K562 (cell line): ENCODE measurements at regions of chr2 and their contacts with region 1.

Region 1: DNA sequence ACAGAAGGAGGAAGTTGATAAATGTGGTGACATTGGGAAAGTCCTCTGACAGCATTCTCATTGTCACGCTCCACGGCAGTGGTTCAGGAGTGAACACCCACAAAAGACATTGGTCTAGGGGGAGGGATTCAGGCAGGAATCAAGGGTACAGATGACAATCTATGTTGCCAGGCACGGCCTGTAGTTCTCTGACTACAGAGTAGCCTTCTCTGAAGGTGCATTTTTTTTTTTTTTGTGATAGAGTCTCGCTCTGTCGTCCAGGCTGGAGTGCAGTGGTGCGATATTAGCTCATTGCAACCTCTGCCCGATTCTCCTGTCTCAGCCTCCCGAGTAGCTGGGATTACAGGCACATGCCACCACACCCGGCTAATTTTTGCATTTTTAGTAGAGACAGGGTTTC is 7.4 kb upstream of the MOB1A start:
- DNase-seq: peak; percentile 41 to 89 (median 63)
- ATAC-seq: peak; percentile 88
- H3K4me3 ChIP-seq: no peak overlapping the region
- H3K27ac ChIP-seq: peak overlapping the region; percentile 87
- H3K4me1 ChIP-seq: peaks cover 22% of the 10 kb centered on the region in 2 experiments
- H3K27me3 ChIP-seq: no peaks in the 10 kb centered on the region
- CTCF ChIP-seq: no peak
- EP300 ChIP-seq: peak; percentile 61
- POLR2A ChIP-seq: peak; percentile 68
- RAD21 ChIP-seq: no peak

Region 2: GRCh38 chr2:74198461-74199274 is 12.6 kb after region 1 on chr2 and contains the start of gene MTHFD2:
- CTCF ChIA-PET with region 1: no interaction called
- POLR2A ChIA-PET with region 1: interaction called, 38 read pairs
- in situ Hi-C with region 1: no loop called
- intact Hi-C with region 1: loop called (anchors 1 kb)
- DNase-seq: peak; percentile 93 to 98 (median 95)
- ATAC-seq: peak; percentile 91
- H3K4me3 ChIP-seq: peak within 1 kb of the TSS; percentile 72
- H3K27ac ChIP-seq: peak within 1 kb of the TSS; percentile 100
- H3K4me1 ChIP-seq: peaks cover 19 to 32% of the 10 kb centered on the region in 2 experiments
- H3K27me3 ChIP-seq: no peaks in the 10 kb centered on the region
- CTCF ChIP-seq: peak; percentile 83 to 86 (median 85)
- EP300 ChIP-seq: peak; percentile 58
- POLR2A ChIP-seq: peak; percentile 99
- RAD21 ChIP-seq: peak; percentile 72 to 82
- polyA plus RNA-seq, gene MTHFD2: 476 to 520 TPM

Region 3: GRCh38 chr2:74228772-74229171 is 42.7 kb after region 1 on chr2:
- CTCF ChIA-PET with region 1: no interaction called
- POLR2A ChIA-PET with region 1: no interaction called
- in situ Hi-C with region 1: no loop called
- intact Hi-C with region 1: no loop called
- DNase-seq: no peak
- ATAC-seq: no peak
- H3K4me3 ChIP-seq: no peak overlapping the region
- H3K27ac ChIP-seq: no peak overlapping the region
- H3K4me1 ChIP-seq: peaks cover 10 to 11% of the 10 kb centered on the region in 2 experiments
- H3K27me3 ChIP-seq: no peaks in the 10 kb centered on the region
- CTCF ChIP-seq: no peak
- EP300 ChIP-seq: no peak
- POLR2A ChIP-seq: no peak
- RAD21 ChIP-seq: no peak

Region 4: DNA sequence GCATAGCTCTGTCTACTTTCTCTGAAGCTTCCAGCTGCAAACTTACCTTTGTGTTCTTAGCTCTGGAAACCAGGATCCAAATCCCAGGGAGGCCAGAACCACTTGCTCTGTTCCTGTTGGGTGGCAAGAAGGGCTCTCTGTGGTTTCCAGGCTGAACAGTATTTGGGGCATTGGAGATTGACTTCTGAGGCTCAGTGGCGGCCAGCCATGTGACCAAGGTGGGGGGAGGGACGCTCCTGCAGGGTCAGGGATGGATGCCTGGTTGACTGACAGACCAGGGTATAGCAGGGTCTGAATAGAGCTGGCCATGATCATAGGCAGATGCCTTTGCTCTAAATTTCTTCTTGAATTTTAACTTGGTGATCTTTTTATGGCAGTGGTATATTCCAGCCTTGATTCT is 142.0 kb after region 1 on chr2:
- CTCF ChIA-PET with region 1: no interaction called
- POLR2A ChIA-PET with region 1: no interaction called
- in situ Hi-C with region 1: no loop called
- intact Hi-C with region 1: no loop called
- DNase-seq: peak in 1 of 4 experiments; percentile 34
- ATAC-seq: peak; percentile 63; the same call in 2 of the 3 replicates
- H3K4me3 ChIP-seq: no peak overlapping the region
- H3K27ac ChIP-seq: no peak overlapping the region
- H3K4me1 ChIP-seq: peaks cover 0 to 14% of the 10 kb centered on the region in 2 experiments; a peak in 4 of 5 replicates
- H3K27me3 ChIP-seq: no peaks in the 10 kb centered on the region; a peak in 1 of 5 replicates
- CTCF ChIP-seq: no peak
- EP300 ChIP-seq: no peak
- POLR2A ChIP-seq: no peak
- RAD21 ChIP-seq: no peak